ENCODE measurements at regions of chr12 and their contacts with region 1.

Region 1: DNA sequence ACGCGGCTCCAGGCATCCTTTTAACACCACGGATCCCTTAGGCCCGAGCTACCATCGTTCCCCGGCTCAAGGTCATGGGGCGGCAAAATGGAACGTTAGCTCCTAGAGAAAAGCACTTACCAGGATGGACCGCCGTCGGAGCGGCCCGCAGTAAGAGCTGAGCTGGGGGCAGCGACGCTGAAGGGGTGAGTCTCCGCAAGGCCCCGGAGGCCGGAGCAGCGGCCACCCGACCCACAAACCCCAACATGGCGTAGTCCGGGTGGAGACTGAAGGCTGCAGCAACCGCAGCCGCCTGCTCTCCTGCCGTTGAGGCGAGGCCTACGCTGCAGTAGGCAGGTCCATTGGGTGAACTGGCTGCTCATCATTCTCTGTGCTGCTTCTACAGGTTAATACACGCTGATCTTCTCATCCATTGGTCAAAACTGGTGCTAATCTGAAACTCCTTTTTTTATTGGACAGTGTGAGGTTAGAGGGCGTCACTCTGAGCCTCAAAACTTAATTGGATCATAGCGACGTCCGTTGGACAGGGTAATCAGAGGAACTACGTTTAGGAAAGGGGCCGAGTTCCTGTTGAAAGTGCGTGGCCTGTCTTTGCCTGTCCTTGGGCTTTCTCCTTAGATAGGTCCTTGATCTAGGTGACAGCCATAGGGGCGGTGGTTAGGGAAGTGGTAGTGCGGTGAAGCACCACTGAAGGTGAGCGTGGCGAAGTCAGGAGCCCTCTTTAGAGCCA is at the start of gene ATP5F1B:
- DNase-seq: peak; percentile 99
- H3K4me3 ChIP-seq: peak within 1 kb of the TSS; percentile 57 to 96 (median 94)
- H3K27ac ChIP-seq: peak within 1 kb of the TSS; percentile 88 to 99 (median 96)
- H3K4me1 ChIP-seq: peaks cover 0 to 41% (median 33%) of the 10 kb centered on the region in 4 donors
- H3K27me3 ChIP-seq: no peaks in the 10 kb centered on the region
- CTCF ChIP-seq: no peak
- EP300 ChIP-seq: no peak
- POLR2A ChIP-seq: peak; percentile 99
- total RNA-seq, gene ATP5F1B: 414 to 487 (median 449) TPM

Region 2: DNA sequence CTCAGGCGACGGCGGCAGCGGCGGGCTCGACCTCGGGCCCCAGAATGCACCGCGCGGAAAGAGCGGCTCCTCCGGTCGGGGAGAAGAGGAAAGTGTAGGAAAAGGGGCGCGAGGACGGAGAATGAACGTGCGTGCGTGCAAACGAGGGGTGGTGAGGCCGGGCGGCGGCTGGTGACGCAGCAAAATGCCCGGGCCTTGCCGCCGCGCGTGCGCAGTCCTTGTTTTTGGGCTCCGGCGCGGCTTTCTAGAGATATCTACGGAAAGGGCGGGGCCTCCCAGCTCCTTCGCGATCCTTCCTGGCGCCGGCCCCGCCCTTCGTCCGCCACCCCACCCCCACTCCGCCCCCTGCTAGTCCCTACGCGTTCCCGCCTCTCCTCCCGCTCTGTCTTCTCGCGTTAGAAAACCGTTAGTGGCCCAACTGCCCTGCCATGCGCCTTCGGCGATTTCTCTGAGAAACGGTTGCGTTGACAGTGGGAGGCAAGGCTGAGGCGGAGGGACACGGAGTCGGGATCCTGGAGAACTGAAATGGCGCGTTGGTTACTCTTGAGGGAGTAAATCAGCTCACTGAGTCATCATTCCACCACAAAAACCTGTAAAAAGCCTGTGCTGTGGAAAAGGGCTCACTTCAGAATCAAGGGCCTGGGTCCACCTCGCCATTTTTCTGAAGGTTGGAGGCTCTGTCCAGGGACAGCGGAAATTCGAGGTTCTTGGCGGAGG is 42.4 kb after region 1 on chr12 and contains the start of gene PTGES3:
- intact Hi-C with region 1: loop called (anchors 1 kb)
- DNase-seq: peak; percentile 99
- H3K4me3 ChIP-seq: peak within 1 kb of the TSS; percentile 63 to 97 (median 85)
- H3K27ac ChIP-seq: peak within 1 kb of the TSS; percentile 97 to 100 (median 98)
- H3K4me1 ChIP-seq: peaks cover 0 to 41% (median 33%) of the 10 kb centered on the region in 4 donors
- H3K27me3 ChIP-seq: no peaks in the 10 kb centered on the region
- CTCF ChIP-seq: no peak
- EP300 ChIP-seq: peak in 1 of 4 donors; percentile 93
- POLR2A ChIP-seq: peak; percentile 91 to 95
- total RNA-seq, gene PTGES3: 92.8 to 156 (median 120) TPM

Region 3: DNA sequence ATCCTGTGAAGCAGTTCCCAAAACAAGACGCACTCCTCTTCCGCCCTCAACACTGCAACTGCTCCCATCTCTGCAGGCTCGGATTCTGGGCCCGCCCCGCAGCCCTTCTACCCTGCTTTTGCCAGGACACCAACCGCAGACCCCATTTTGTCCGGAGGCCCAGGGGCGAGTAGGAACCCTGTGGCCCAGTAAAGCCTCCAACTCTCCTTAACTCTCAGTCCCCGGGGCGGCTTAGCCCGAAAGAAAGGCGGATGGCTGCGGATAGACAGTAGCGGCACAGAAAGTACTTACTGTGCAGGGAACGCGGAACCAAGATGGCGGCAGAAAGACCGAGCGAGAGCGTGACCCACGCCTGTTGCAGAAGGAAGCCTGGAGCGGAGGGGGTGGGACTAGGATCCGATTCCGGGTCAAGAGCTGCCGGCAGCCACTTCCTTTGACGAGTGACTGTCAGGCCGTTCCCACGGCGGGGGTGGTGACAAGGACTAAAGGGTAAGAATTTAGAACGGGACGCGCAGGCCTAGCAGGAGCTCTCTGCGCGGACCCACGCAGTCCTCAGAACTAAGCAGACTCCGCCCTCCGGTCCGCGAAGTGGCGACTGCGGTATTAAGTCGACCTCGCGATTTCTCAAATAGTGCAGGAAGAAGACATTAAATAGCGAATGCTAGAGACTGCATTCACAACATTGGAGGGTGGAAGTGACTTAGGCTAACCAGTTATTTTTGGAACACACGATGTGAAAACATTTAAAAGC is 79.3 kb after region 1 on chr12 and contains the start of gene NACA:
- intact Hi-C with region 1: loop called (anchors 1 kb)
- DNase-seq: peak; percentile 99
- H3K4me3 ChIP-seq: peak within 1 kb of the TSS; percentile 59 to 97 (median 68)
- H3K27ac ChIP-seq: peak within 1 kb of the TSS; percentile 88 to 96 (median 90)
- H3K4me1 ChIP-seq: peaks cover 0 to 47% (median 41%) of the 10 kb centered on the region in 4 donors
- H3K27me3 ChIP-seq: no peaks in the 10 kb centered on the region
- CTCF ChIP-seq: no peak
- EP300 ChIP-seq: peak in 2 of 4 donors; percentile 5 to 40
- POLR2A ChIP-seq: peak; percentile 96 to 98
- total RNA-seq, gene NACA: 1,056 to 1,536 (median 1,356) TPM